ENCODE measurements at regions of chr2 and their contacts with region 1.

Region 1: DNA sequence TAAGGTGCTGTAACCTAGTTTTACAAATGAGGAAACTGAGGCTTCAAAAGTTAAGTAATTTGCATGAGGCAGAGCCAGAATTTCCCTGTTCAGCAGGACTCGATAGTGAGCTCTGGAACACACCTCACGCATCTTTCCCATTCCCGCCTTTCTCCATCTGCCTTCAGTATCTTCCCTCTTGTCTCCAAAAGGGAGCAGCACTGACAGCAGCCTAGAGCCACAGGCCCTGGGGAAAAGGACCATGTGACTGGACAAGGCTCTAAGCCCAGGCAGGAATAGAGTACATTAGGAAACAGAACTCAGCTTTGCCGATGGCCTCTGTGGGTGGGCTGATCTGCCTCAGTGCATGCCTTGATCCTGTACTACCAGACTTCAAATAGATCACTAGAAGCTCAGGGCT is 21.5 kb downstream of the GPR155 start:
- DNase-seq: no peak
- ATAC-seq: no peak
- H3K4me3 ChIP-seq: no peak overlapping the region
- H3K27ac ChIP-seq: no peak overlapping the region
- H3K4me1 ChIP-seq: no peaks in the 10 kb centered on the region
- H3K27me3 ChIP-seq: no peaks in the 10 kb centered on the region
- CTCF ChIP-seq: no peak
- POLR2A ChIP-seq: no peak
- RAD21 ChIP-seq: no peak

Region 2: GRCh38 chr2:174487108-174487819 is 21.9 kb after region 1 on chr2:
- CTCF ChIA-PET with region 1: interaction called, 13 read pairs
- POLR2A ChIA-PET with region 1: no interaction called
- dilution Hi-C with region 1: no loop called
- in situ Hi-C with region 1: no loop called
- intact Hi-C with region 1: no loop called
- DNase-seq: peak; percentile 97
- ATAC-seq: peak; percentile 96
- H3K4me3 ChIP-seq: peak overlapping the region; percentile 90
- H3K27ac ChIP-seq: peak overlapping the region; percentile 94
- H3K4me1 ChIP-seq: peaks cover 3% of the 10 kb centered on the region; the same call in 1 of the 2 replicates
- H3K27me3 ChIP-seq: no peaks in the 10 kb centered on the region
- CTCF ChIP-seq: no peak
- POLR2A ChIP-seq: peak; percentile 41; the same call in 1 of the 2 replicates
- RAD21 ChIP-seq: no peak

Region 3: GRCh38 chr2:174536304-174536703 is 71.0 kb after region 1 on chr2:
- CTCF ChIA-PET with region 1: interaction called, 5 read pairs
- POLR2A ChIA-PET with region 1: no interaction called
- dilution Hi-C with region 1: no loop called
- in situ Hi-C with region 1: loop called (anchors 5 kb)
- intact Hi-C with region 1: no loop called
- DNase-seq: no peak
- ATAC-seq: no peak
- H3K4me3 ChIP-seq: no peak overlapping the region
- H3K27ac ChIP-seq: no peak overlapping the region
- H3K4me1 ChIP-seq: no peaks in the 10 kb centered on the region
- H3K27me3 ChIP-seq: peaks cover 4% of the 10 kb centered on the region
- CTCF ChIP-seq: no peak
- POLR2A ChIP-seq: no peak
- RAD21 ChIP-seq: no peak

Region 4: DNA sequence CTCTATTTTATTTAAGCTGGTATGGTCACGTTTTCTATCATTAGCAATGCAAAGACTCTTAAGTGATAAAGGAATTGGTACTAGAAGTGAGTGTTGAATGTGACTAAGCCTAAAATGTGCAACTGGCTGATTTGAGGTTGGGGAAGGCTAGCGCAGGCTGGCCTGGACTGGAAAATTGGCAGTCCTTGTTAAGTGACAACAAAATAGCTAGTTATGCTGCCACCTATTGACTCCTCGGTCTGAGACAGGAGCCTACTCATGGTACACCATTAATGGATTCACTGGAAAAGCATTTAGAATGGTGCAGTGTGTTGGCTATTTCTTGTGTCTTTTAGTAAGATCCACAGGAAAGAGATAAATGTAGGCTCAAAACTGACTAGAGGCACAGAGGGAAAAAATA is 138.0 kb after region 1 on chr2:
- CTCF ChIA-PET with region 1: interaction called, 5 read pairs
- POLR2A ChIA-PET with region 1: interaction called, 8 read pairs
- dilution Hi-C with region 1: no loop called
- in situ Hi-C with region 1: no loop called
- intact Hi-C with region 1: loop called (anchors 2 kb)
- DNase-seq: peak; percentile 67
- ATAC-seq: peak; percentile 70
- H3K4me3 ChIP-seq: no peak overlapping the region
- H3K27ac ChIP-seq: no peak overlapping the region
- H3K4me1 ChIP-seq: peaks cover 2% of the 10 kb centered on the region
- H3K27me3 ChIP-seq: no peaks in the 10 kb centered on the region
- CTCF ChIP-seq: peak; percentile 42
- POLR2A ChIP-seq: no peak
- RAD21 ChIP-seq: peak; percentile 41; the same call in 1 of the 2 replicates

Region 5: GRCh38 chr2:174688079-174688478 is 222.8 kb after region 1 on chr2:
- CTCF ChIA-PET with region 1: interaction called, 11 read pairs
- POLR2A ChIA-PET with region 1: no interaction called
- dilution Hi-C with region 1: no loop called
- in situ Hi-C with region 1: loop called (anchors 10 kb)
- intact Hi-C with region 1: loop called (anchors 1 kb)
- DNase-seq: peak; percentile 61
- ATAC-seq: peak; percentile 65
- H3K4me3 ChIP-seq: no peak overlapping the region
- H3K27ac ChIP-seq: no peak overlapping the region
- H3K4me1 ChIP-seq: peaks cover 2% of the 10 kb centered on the region; the same call in 1 of the 2 replicates
- H3K27me3 ChIP-seq: peaks cover 13% of the 10 kb centered on the region
- CTCF ChIP-seq: peak; percentile 61
- POLR2A ChIP-seq: no peak
- RAD21 ChIP-seq: peak; percentile 58